ENCODE measurements at regions of chr9 and their contacts with region 1.

Region 1: DNA sequence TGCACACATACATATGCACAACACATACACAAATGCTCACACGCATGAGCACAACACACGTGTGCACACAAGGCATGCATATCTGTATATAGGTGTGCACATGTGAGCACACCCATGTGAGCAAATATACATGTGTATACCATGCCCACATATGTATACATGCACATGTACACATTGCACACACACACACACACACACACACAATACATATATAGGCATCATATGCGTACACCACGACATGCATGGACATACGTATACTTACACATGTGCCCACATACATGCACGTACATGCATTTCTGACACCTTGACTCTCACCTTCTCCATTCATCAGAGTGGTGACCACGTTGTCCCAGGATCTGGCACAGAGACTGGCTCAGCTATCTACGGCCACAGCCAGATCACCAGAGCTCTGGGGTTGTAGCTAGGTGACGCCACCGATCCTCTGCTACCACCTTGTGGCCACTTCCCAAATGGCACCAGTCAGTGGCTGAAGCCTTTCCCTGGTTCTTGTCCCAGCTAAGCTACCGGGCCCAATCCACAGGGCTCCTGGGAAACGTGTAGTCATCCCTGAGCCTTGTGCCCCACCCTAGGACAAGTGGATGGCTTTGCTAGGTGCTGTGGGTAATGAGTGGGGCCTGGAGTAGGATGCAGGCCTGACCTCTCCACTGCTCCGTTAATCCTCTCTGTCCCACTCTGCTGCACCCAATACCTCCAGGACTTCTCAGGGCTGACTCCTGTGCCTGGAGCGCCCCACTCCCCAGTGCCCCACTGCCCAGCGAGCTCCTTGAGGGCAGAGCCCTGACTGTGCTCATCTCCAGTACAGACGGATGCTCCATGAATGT is 194.4 kb downstream of the RGS3 start:
- DNase-seq: peak; percentile 76 to 98
- H3K4me3 ChIP-seq: no peak overlapping the region
- H3K27ac ChIP-seq: no peak overlapping the region
- H3K4me1 ChIP-seq: peaks cover 0 to 12% (median under 1%) of the 10 kb centered on the region in 4 experiments; a peak in 6 of 7 replicates
- H3K27me3 ChIP-seq: no peaks in the 10 kb centered on the region
- CTCF ChIP-seq: peak; percentile 96 to 99 (median 97)
- EP300 ChIP-seq: no peak
- POLR2A ChIP-seq: no peak
- RAD21 ChIP-seq: peak; percentile 99 to 100

Region 2: DNA sequence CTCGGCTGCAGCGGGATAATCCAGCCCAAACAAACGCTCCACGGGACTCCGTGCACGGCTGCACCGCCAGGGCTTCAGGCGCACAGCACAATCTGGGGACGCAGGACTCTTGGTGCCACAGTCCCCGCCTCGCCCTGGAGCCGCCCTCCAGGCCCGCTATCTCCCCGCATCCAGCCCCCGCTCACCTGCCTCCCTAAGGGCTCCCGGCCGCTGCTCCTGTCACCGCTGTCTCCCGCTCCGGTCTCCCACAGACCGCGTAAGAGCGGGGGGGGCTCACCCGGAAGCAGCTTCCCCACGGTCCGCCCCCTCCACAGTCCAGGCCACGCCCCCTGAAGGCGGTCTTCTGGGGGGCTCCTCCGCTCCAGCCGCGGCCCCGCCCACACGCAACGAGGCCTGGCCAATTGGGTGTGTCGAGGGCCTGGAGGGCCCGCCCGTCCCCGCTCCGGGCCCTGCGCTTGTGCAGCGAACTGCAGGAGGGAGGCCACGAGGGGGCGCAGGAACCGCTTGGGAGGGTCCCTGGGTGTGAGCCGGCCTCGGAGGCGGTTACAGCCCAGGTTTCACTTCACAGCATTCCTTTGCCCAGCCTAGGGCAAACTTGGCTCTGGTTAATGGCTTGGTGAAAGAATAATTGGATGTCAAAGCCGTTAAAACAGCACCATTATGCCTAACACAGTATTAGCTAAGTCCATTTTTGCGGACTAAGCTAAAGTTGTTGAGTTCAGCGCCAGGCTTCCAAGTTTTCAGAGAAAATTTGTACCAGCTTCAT is 256.7 kb before region 1 on chr9 and contains the start of gene ALAD:
- CTCF ChIA-PET with region 1: interaction called, 61 read pairs
- POLR2A ChIA-PET with region 1: no interaction called
- DNase-seq: peak; percentile 93 to 100
- H3K4me3 ChIP-seq: peak within 1 kb of the TSS; percentile 70 to 95 (median 90)
- H3K27ac ChIP-seq: no peak within 1 kb of the TSS
- H3K4me1 ChIP-seq: peaks cover 0 to 2% (median 0%) of the 10 kb centered on the region in 4 experiments; a peak in 2 of 7 replicates
- H3K27me3 ChIP-seq: no peaks in the 10 kb centered on the region
- CTCF ChIP-seq: peak; percentile 81 to 93 (median 92)
- EP300 ChIP-seq: peak in 1 of 2 experiments; percentile 64; a peak in 1 of 3 replicates
- POLR2A ChIP-seq: no peak
- RAD21 ChIP-seq: peak; percentile 70 to 79
- total RNA-seq, gene ALAD: 13.0 and 15.3 TPM in 2 replicates

Region 3: GRCh38 chr9:113463418-113464285 is 194.3 kb before region 1 on chr9 and contains the start of gene RGS3:
- CTCF ChIA-PET with region 1: interaction called, 21 read pairs
- POLR2A ChIA-PET with region 1: no interaction called
- DNase-seq: peak; percentile 34 to 88
- H3K4me3 ChIP-seq: peak within 1 kb of the TSS; percentile 35 to 61 (median 46)
- H3K27ac ChIP-seq: no peak within 1 kb of the TSS
- H3K4me1 ChIP-seq: peaks cover 0 to 10% (median 7%) of the 10 kb centered on the region in 4 experiments; a peak in 6 of 7 replicates
- H3K27me3 ChIP-seq: peaks cover 0 to 29% (median 19%) of the 10 kb centered on the region in 4 experiments; a peak in 6 of 7 replicates
- CTCF ChIP-seq: no peak
- EP300 ChIP-seq: no peak
- POLR2A ChIP-seq: no peak
- RAD21 ChIP-seq: peak; percentile 2 to 18; a peak in 1 of 4 replicates
- total RNA-seq, gene RGS3: 18.2 TPM in 2 replicates

Region 4: GRCh38 chr9:113523421-113524236 is 134.3 kb before region 1 on chr9:
- CTCF ChIA-PET with region 1: interaction called, 29 read pairs
- POLR2A ChIA-PET with region 1: no interaction called
- DNase-seq: no peak
- H3K4me3 ChIP-seq: no peak overlapping the region
- H3K27ac ChIP-seq: no peak overlapping the region
- H3K4me1 ChIP-seq: peaks cover 0 to 2% (median 0%) of the 10 kb centered on the region in 4 experiments; a peak in 1 of 7 replicates
- H3K27me3 ChIP-seq: no peaks in the 10 kb centered on the region
- CTCF ChIP-seq: no peak
- EP300 ChIP-seq: no peak
- POLR2A ChIP-seq: no peak
- RAD21 ChIP-seq: no peak

Region 5: GRCh38 chr9:113578882-113579282 is 79.0 kb before region 1 on chr9:
- CTCF ChIA-PET with region 1: interaction called, 1,065 read pairs
- POLR2A ChIA-PET with region 1: no interaction called
- DNase-seq: no peak
- H3K4me3 ChIP-seq: no peak overlapping the region
- H3K27ac ChIP-seq: no peak overlapping the region
- H3K4me1 ChIP-seq: peaks cover 0 to 14% (median 7%) of the 10 kb centered on the region in 4 experiments; a peak in 6 of 7 replicates
- H3K27me3 ChIP-seq: no peaks in the 10 kb centered on the region
- CTCF ChIP-seq: no peak
- EP300 ChIP-seq: no peak
- POLR2A ChIP-seq: no peak
- RAD21 ChIP-seq: no peak

Region 6: DNA sequence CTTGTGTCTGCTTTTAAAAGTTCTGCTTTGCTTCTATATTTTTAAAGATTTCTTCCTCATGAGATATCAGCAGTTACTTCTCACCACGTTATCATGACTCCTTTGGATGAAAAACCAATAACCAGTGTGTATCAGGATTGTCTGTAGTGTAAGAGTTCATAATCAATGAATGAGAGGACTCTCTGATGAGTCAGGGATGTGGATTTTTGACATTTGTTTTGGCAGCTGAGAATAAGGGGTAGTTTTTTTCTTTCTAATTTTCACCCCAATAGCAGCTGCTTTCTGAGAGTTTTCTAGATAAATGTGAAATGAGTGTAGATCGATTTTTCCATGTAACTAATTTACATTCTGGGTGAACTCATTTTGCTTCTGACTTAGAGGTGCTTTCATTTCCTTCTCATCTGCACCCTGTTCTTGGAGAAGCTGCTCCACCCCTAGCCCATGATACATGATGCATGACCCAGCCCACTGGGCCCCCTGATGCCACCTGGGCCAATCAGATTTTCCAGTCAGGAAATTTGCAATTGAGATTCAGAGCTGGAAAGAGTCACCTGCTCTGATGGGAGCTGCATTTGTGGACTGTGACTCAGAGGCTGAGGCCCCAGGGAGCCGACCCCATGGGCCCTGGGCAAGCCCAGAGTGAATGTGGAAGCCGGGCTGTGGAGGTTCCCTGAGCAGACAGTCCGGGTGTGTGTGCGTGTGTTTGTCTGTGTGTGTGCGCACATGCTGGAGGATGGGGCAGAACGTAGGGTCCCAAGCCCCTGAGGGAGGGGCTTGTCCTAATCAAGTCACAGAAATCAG is 35.1 kb before region 1 on chr9:
- CTCF ChIA-PET with region 1: interaction called, 73 read pairs
- POLR2A ChIA-PET with region 1: interaction called, 3 read pairs
- DNase-seq: peak; percentile 77
- H3K4me3 ChIP-seq: peak overlapping the region in 1 of 4 experiments; percentile 18; a peak in 1 of 8 replicates
- H3K27ac ChIP-seq: peak overlapping the region; percentile 88; the same call in 1 of the 2 replicates
- H3K4me1 ChIP-seq: peaks cover 6 to 23% (median 18%) of the 10 kb centered on the region in 4 experiments
- H3K27me3 ChIP-seq: no peaks in the 10 kb centered on the region; a peak in 3 of 7 replicates
- CTCF ChIP-seq: no peak
- EP300 ChIP-seq: peak in 1 of 2 experiments; percentile 78; a peak in 1 of 3 replicates
- POLR2A ChIP-seq: peak in 1 of 2 experiments; percentile 51; a peak in 2 of 3 replicates
- RAD21 ChIP-seq: no peak

Region 7: GRCh38 chr9:113675475-113675941 is 17.6 kb after region 1 on chr9:
- CTCF ChIA-PET with region 1: interaction called, 47 read pairs
- POLR2A ChIA-PET with region 1: no interaction called
- DNase-seq: no peak
- H3K4me3 ChIP-seq: no peak overlapping the region
- H3K27ac ChIP-seq: no peak overlapping the region
- H3K4me1 ChIP-seq: no peaks in the 10 kb centered on the region; a peak in 1 of 7 replicates
- H3K27me3 ChIP-seq: no peaks in the 10 kb centered on the region; a peak in 1 of 7 replicates
- CTCF ChIP-seq: no peak
- EP300 ChIP-seq: no peak
- POLR2A ChIP-seq: no peak
- RAD21 ChIP-seq: no peak